Heart left ventricle (tissue), 16 donors: ENCODE measurements at regions of chr19 and their contacts with region 1.

Region 1: DNA sequence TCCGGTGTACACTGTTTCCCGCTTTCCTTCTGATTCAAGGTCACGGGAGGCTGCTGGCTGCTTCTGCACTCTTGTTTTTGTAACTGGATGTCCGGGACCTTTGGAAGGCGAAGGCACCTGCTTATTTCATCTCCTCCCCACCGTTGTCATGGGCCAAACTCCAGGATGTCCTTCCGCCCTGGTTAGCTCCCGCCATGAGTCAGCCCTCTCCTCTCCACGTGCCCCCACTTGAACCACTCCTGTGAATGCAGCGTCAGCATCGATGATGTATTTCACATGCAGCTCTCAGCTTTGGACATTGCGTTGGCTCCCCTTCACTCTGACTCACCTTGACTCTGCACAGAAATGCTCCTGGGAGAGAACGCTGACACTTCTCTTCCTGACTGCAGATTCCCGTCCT is 5.5 kb upstream of the GALP start:
- DNase-seq: peak in 3 of 5 donors; percentile 35 to 50 (median 45)
- ATAC-seq: peak; percentile 30 to 92 (median 46)
- H3K4me3 ChIP-seq: no peak overlapping the region
- H3K27ac ChIP-seq: peak overlapping the region in 3 of 12 donors; percentile 5 to 46 (median 28)
- H3K4me1 ChIP-seq: peaks cover 0 to 6% (median 0%) of the 10 kb centered on the region in 12 donors
- H3K27me3 ChIP-seq: peaks cover 0 to 9% (median 6%) of the 10 kb centered on the region in 9 donors
- CTCF ChIP-seq: no peak
- POLR2A ChIP-seq: no peak

Region 2: DNA sequence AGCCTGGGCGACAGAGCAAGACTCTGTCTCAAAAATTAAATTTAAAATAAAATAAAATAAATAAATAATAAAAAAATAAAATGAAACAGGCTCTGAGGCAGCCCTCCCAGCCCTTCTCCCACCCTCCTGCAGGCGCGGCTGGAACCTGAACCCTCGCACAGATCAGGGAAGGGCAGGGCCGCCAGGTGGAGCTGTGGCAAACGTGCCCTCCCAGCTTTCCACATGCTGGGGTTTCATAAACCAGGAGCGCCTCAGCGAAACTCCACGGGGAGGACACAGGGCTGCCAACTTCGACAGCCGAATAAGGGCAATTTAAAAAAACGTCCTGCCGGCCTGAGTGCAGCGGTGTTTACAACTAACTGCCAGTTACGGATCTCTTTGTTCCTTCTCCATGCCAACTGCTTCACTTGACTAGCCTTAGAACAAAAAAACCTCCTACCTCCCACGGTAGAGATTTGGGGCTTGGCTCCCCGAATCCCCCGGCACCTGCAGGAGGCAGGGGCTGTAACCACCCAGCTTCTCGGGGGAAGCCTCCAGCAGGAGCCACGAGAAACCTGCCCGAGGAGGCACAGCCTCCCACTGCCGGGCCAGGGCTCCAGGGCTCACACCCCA is 65.1 kb before region 1 on chr19:
- intact Hi-C with region 1: loop called in 1 of 10 experiments (anchors 2 kb)
- DNase-seq: peak in 4 of 5 donors; percentile 56 to 77 (median 66)
- ATAC-seq: peak; percentile 67 to 84 (median 74)
- H3K4me3 ChIP-seq: peak overlapping the region in 2 of 12 donors; percentile 15 to 16
- H3K27ac ChIP-seq: peak overlapping the region in 5 of 12 donors; percentile 18 to 84 (median 37)
- H3K4me1 ChIP-seq: peaks cover 14 to 51% (median 36%) of the 10 kb centered on the region in 12 donors
- H3K27me3 ChIP-seq: no peaks in the 10 kb centered on the region
- CTCF ChIP-seq: peak; percentile 40 to 78 (median 65)
- POLR2A ChIP-seq: no peak

Region 3: DNA sequence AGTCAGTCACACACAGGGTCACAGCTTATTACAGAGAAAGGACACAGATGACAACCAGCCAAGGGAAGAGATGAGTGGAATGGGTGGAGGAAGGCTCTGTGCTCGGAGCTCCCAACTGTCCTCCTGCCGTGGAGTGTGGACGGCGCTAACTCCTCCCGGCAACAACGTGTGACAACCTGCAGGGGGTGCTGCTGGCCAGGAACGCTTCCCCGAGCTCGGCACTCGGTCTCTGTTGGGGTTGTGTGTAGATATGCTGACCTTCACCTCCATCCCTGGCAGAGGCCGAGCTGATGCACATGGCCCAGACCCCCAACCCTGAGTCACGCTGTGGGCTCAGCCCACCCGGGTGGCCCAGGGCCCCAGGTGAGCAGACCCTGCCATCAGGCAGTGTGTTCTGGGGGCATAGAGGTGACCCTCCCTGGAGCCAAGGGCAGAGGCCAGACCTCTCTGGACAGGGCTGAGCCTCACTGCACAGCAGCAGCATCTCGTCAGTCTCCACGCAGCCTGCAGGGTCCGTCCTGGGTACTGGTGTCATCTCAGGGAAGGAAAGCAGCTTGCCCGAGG is 15.1 kb before region 1 on chr19:
- intact Hi-C with region 1: loop called in 3 of 10 experiments (anchors 1 to 2 kb)
- DNase-seq: peak in 1 of 5 donors; percentile 47
- ATAC-seq: peak in 3 of 4 donors; percentile 44 to 54 (median 51)
- H3K4me3 ChIP-seq: no peak overlapping the region
- H3K27ac ChIP-seq: no peak overlapping the region
- H3K4me1 ChIP-seq: peaks cover 0 to 22% (median 7%) of the 10 kb centered on the region in 12 donors
- H3K27me3 ChIP-seq: no peaks in the 10 kb centered on the region
- CTCF ChIP-seq: peak; percentile 20 to 65 (median 44)
- POLR2A ChIP-seq: no peak

Region 4: DNA sequence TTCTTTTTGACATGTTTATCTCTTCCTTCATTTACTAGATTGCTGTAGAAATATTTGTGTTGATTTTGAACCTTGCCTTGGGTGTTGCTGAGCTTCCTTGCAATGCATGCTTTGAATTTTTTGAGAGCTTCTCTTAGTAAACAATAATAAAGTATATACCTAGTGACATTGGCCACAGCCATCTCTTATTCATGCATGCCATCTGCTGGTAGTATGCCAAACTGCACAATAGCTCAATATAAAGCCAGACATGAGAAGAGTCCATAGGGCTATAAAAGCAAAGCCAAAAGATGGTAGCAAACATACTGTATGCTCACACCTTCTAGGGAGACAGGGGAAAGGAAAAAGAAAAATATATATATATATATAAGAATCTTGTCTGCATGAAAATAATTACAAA is 163.2 kb after region 1 on chr19:
- intact Hi-C with region 1: loop called in 1 of 10 experiments (anchors 10 kb)
- DNase-seq: peak in 1 of 5 donors; percentile 24
- ATAC-seq: peak in 2 of 4 donors; percentile 60 to 69
- H3K4me3 ChIP-seq: no peak overlapping the region
- H3K27ac ChIP-seq: no peak overlapping the region
- H3K4me1 ChIP-seq: no peaks in the 10 kb centered on the region
- H3K27me3 ChIP-seq: no peaks in the 10 kb centered on the region
- CTCF ChIP-seq: peak; percentile 36 to 70 (median 60)
- POLR2A ChIP-seq: no peak

Region 5: GRCh38 chr19:56350416-56351045 is 180.3 kb after region 1 on chr19:
- intact Hi-C with region 1: loop called in 2 of 10 experiments (anchors 10 kb)
- DNase-seq: peak in 3 of 5 donors; percentile 22 to 33 (median 26)
- ATAC-seq: peak in 2 of 4 donors; percentile 47 to 50
- H3K4me3 ChIP-seq: no peak overlapping the region
- H3K27ac ChIP-seq: no peak overlapping the region
- H3K4me1 ChIP-seq: no peaks in the 10 kb centered on the region
- H3K27me3 ChIP-seq: no peaks in the 10 kb centered on the region
- CTCF ChIP-seq: peak; percentile 76 to 95 (median 88)
- POLR2A ChIP-seq: no peak